ENCODE measurements at regions of chr1 and their contacts with region 1.

Region 1: DNA sequence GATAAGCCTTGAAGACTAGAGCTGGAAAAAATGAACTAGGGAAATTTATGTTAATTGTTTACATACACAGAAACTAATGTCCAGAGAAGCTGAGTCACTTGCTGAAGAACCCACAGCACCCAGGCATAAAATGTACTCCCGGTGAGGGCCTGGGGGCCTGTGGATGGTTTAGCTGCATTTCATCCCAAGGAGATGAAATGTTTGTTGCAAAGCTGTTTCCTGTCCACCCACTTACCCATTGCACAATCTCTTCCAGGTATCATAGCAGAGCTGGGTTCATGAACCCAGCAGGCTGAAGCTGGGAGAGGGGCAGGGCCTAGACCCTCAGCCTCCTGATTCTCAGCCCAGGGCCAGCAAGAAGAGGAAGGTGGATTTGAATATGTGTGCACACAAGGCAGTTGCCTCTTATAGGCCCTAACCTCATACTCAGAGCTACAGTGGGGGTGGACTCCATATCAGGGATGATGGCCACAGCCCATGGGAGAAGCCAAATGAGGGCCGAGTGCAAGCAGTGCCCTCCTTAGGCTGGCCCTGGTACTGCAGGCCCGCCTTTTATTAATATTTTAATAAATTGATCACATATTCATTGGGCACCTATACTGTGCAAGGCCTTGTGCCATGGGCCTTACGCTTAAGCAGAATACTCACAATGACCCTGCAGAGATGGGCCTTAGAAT is 110.8 kb downstream of the LACTBL1 start:
- DNase-seq: peak; percentile 75 to 88
- H3K4me3 ChIP-seq: no peak overlapping the region
- H3K27ac ChIP-seq: peak overlapping the region; percentile 91
- H3K4me1 ChIP-seq: peaks cover 19% of the 10 kb centered on the region
- H3K27me3 ChIP-seq: no peaks in the 10 kb centered on the region
- CTCF ChIP-seq: peak; percentile 92

Region 2: DNA sequence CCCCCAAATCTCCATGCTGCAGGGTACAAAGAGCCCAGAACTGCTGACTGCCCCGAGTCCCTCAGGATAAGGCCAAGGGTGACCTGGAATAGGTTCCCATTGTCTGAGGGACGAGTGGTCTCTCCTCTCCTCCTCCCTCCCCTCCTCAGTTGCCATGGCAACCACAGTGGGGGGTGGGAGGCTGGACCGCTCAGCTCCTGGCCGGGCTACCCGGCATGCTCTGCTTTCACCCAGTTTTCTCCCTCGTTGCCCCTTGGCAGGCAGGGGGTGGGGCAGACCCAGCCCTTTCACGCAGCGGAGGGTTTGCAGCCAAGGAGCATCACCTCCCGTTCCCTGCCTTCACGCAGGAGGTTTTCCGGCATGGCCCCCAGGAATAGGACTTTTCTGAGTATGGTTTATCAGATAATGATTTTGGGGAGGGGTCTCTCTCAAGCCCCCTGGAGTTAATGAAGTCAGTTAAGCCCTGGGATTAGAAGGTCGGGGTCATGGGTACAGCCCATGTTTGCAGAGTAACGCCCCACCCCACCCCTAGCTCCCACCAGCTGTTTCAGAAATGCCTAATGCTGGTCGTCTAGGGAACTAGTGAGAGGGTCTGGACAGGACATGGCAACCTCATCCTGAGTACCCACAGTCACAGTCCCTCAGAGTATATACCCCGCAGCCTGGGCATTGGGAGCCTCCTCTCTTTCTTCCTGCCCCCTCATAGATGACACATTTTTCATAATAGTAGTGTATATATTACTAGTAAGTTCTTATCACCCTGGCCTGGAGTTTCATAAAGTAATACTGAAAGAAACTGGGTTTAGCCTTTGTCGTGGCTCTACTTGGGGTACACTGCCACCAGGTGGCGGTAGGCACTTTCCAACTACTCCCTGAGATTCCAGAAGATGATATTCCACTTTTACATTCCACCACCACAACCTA is 188.2 kb before region 1 on chr1:
- CTCF ChIA-PET with region 1: no interaction called
- POLR2A ChIA-PET with region 1: no interaction called
- intact Hi-C with region 1: loop called (anchors 1 kb)
- DNase-seq: peak in 1 of 2 experiments; percentile 64
- H3K4me3 ChIP-seq: no peak overlapping the region
- H3K27ac ChIP-seq: no peak overlapping the region
- H3K4me1 ChIP-seq: no peaks in the 10 kb centered on the region
- H3K27me3 ChIP-seq: no peaks in the 10 kb centered on the region
- CTCF ChIP-seq: peak; percentile 81

Region 3: GRCh38 chr1:22704440-22705067 is 157.3 kb before region 1 on chr1:
- CTCF ChIA-PET with region 1: interaction called, 37 read pairs
- POLR2A ChIA-PET with region 1: no interaction called
- intact Hi-C with region 1: loop called (anchors 1 kb)
- DNase-seq: peak; percentile 66 to 78
- H3K4me3 ChIP-seq: no peak overlapping the region
- H3K27ac ChIP-seq: no peak overlapping the region
- H3K4me1 ChIP-seq: no peaks in the 10 kb centered on the region
- H3K27me3 ChIP-seq: no peaks in the 10 kb centered on the region
- CTCF ChIP-seq: peak; percentile 81

Region 4: DNA sequence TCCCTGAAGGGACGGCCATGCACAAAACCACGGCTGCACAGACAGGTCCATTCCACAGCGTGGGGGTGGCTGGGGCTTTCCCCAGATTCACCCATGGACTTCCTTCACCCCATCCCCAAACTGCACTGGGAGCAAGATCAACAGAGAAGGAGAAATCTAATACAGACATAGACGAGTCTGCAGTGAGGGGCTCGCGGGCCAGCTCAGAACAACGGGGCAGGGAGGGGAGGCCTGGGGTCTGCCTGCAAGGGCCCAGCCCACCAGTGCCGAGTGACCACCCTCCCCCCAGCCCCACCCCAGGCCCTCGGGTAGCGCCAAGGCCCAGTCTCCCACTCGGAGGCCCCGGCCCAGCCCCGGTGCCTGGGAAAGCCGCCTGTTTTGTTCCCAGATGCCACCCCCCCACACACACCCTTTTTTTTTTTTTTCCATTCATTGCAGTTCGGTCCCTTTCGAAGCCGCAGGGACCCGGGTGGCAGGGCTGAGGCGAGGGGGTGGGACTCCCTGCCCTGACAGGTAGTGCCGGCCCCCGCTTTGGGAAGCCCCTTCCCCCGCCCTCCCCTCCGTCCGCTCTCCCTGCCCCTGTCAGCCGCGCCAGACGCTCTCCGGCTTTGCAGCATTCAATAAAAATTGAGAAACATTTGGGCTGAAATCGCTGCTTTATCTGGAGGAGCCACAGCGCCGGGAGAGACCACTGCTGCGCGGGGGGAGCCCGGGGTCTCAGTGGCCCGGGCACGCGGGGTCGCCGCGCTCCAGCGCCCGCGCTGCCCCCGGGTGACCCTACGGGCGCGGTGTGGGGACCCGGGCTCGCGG is 151.8 kb before region 1 on chr1:
- CTCF ChIA-PET with region 1: interaction called, 37 read pairs
- POLR2A ChIA-PET with region 1: interaction called, 12 read pairs
- intact Hi-C with region 1: no loop called
- DNase-seq: peak in 1 of 2 experiments; percentile 64
- H3K4me3 ChIP-seq: peak overlapping the region; percentile 57; the same call in 1 of the 2 replicates
- H3K27ac ChIP-seq: no peak overlapping the region
- H3K4me1 ChIP-seq: 0 out of 2 replicates have a peak, but pooled peaks cover 5% of the 10 kb centered on the region
- H3K27me3 ChIP-seq: no peaks in the 10 kb centered on the region
- CTCF ChIP-seq: no peak

Region 5: DNA sequence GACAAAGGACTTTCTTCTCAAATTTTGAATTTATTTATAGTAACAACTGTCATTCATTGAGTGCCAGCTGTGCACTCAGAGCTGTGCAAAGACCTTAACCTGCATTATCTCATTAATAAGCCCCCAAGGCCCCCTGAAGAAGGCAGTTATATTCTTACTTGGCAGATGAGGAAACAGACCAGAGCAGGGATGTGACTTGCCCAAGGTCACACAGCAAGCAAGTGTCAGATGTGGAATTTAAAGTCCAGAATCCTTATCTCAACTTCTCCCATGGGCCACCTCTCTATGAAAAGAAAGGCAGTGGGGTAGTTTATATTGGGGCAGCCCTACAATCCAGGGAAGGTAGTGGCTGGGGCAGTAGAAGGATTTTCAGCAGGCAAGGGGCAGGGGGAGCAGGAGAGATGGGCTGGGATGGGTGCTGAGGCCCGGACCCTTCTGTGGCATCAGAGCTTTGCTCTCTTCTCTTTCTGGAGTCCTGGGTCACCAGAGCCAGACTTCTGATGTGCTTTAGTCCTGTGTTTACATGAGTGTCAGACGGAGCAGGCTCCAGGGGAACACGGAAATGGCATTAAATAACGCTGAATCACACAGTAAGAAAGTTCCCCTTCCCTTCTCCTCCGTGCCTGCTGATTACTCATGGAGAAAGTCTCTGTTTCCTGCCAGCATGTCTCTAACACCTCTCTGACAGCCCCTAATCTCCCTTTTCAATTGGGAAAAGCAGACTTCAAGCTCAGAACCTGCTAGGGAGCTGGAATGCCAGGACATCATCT is 111.8 kb before region 1 on chr1:
- CTCF ChIA-PET with region 1: interaction called, 4 read pairs
- POLR2A ChIA-PET with region 1: interaction called, 3 read pairs
- intact Hi-C with region 1: loop called (anchors 1 kb)
- DNase-seq: peak; percentile 50 to 88
- H3K4me3 ChIP-seq: no peak overlapping the region
- H3K27ac ChIP-seq: peak overlapping the region; percentile 89
- H3K4me1 ChIP-seq: peaks cover 63% of the 10 kb centered on the region
- H3K27me3 ChIP-seq: no peaks in the 10 kb centered on the region
- CTCF ChIP-seq: no peak

Region 6: DNA sequence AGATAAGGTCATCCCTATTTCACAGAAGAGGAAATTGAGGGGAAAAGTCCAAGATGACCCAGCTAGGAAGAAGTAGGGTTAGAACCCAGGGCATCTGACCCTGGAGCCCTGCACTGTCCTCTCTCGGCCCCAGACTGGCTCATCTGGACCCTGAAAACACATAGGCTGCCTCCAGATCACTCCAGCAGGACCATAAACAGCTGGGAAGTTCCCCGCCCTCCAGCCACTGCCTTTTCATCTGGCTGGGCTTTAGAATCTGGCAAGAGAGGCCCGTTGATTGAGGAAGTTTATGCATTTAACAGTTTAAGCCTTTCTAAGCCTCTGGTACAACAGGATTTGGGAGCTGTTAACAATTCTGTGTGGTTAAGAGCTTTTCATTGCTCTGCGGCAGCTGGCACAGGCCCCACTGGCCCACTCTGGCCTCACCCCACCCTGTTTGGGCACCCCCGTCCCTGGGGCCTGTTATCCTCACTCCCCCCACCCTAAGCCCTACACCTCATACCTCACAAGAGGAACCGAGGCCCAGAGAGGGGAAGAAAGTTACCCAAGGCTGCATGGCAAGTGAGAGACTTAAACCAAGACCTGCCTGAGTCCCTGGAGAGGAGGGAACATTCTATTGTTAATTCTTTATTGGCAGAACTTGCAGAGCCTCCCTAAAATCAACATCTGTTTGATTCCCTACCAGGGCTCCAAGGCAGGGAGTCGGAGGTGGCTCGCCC is 67.1 kb before region 1 on chr1:
- CTCF ChIA-PET with region 1: interaction called, 3 read pairs
- POLR2A ChIA-PET with region 1: no interaction called
- intact Hi-C with region 1: loop called (anchors 5 kb)
- DNase-seq: no peak
- H3K4me3 ChIP-seq: no peak overlapping the region
- H3K27ac ChIP-seq: no peak overlapping the region
- H3K4me1 ChIP-seq: no peaks in the 10 kb centered on the region
- H3K27me3 ChIP-seq: no peaks in the 10 kb centered on the region
- CTCF ChIP-seq: no peak

Region 7: GRCh38 chr1:22850681-22851080 is 11.2 kb before region 1 on chr1:
- CTCF ChIA-PET with region 1: interaction called, 4 read pairs
- POLR2A ChIA-PET with region 1: interaction called, 13 read pairs
- intact Hi-C with region 1: no loop called
- DNase-seq: peak in 1 of 2 experiments; percentile 46
- H3K4me3 ChIP-seq: no peak overlapping the region
- H3K27ac ChIP-seq: no peak overlapping the region
- H3K4me1 ChIP-seq: no peaks in the 10 kb centered on the region
- H3K27me3 ChIP-seq: no peaks in the 10 kb centered on the region
- CTCF ChIP-seq: no peak